ENCODE measurements at regions of chr16 and their contacts with region 1.

Region 1: GRCh38 chr16:25031441-25032307 is 16.5 kb upstream of the ARHGAP17 start:
- DNase-seq: peak; percentile 93
- ATAC-seq: peak; percentile 97
- H3K4me3 Mint-ChIP-seq: peak overlapping the region; percentile 75
- H3K27ac Mint-ChIP-seq: peak overlapping the region; percentile 100
- H3K4me1 Mint-ChIP-seq: peaks cover 46% of the 10 kb centered on the region
- H3K27me3 Mint-ChIP-seq: no peaks in the 10 kb centered on the region

Region 2: DNA sequence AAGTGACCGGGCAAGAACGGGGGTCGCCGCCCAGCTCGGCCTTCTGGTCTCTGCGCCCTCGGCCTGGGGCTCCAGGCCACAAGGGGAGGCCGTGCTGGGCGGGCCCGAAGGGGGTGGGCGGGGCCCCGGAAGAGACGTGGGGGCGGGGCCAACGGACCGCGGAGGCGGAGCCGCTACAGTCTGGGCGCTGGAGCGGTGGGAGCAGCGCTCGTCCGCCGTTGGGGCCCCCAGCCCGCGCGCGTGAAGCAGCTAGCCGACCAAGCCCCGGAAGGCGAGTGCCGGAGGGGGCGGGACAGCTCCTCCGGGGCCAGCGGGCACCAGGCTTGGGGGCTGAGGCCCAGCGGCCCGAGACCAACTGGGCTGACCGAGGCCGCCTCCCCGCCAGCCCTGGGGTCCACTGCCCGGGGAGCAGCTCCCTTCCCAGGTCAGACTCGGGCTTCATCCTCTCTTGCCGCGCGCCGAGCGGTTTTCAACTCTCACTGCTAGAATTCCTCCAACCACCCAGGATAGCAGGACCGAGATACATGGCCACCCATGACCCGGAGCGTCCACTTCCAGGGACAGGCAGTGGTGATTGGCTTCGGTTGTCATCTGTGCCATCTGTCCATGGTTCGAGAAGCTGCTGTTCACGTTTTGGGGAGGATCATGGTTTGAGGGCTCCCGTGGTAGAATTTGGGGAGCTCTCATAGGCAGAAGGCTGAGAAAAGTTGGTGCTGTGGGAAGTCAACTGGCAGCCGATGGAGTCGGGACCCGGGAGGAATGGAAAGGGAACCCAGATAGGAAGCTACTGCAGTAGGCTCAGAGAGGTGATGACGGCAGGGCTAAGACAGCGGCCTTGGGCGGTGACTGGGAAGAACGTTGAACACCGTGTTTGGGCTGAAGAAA is 35.3 kb after region 1 on chr16:
- CTCF ChIA-PET with region 1: no interaction called
- POLR2A ChIA-PET with region 1: no interaction called
- intact Hi-C with region 1: loop called in 1 of 2 experiments (anchors 1 kb)
- DNase-seq: peak; percentile 91
- ATAC-seq: peak; percentile 97
- H3K4me3 Mint-ChIP-seq: peak overlapping the region; percentile 76
- H3K27ac Mint-ChIP-seq: peak overlapping the region; percentile 81
- H3K4me1 Mint-ChIP-seq: peaks cover 38% of the 10 kb centered on the region
- H3K27me3 Mint-ChIP-seq: no peaks in the 10 kb centered on the region

Region 3: GRCh38 chr16:25257504-25257955 is 225.9 kb after region 1 on chr16 and contains the start of gene ZKSCAN2:
- CTCF ChIA-PET with region 1: no interaction called
- POLR2A ChIA-PET with region 1: no interaction called
- intact Hi-C with region 1: loop called in 1 of 2 experiments (anchors 1 kb)
- DNase-seq: peak; percentile 92
- ATAC-seq: peak; percentile 82
- H3K4me3 Mint-ChIP-seq: peak within 1 kb of the TSS; percentile 93
- H3K27ac Mint-ChIP-seq: peak within 1 kb of the TSS; percentile 98
- H3K4me1 Mint-ChIP-seq: peaks cover 59% of the 10 kb centered on the region
- H3K27me3 Mint-ChIP-seq: no peaks in the 10 kb centered on the region
- total RNA-seq, gene ZKSCAN2: 5.5 to 5.6 TPM